A549 (cell line): ENCODE measurements at regions of chr1 and their contacts with region 1.

Region 1: GRCh38 chr1:179234863-179235262 is 5.4 kb upstream of the ABL2 start:
- DNase-seq: no peak
- ATAC-seq: no peak
- H3K4me3 ChIP-seq: no peak overlapping the region
- H3K27ac ChIP-seq: peak overlapping the region; percentile 38 to 72; a peak in 5 of 6 replicates
- H3K4me1 ChIP-seq: peaks cover 52% of the 10 kb centered on the region
- CTCF ChIP-seq: no peak
- EP300 ChIP-seq: no peak
- POLR2A ChIP-seq: no peak
- RAD21 ChIP-seq: no peak

Region 2: DNA sequence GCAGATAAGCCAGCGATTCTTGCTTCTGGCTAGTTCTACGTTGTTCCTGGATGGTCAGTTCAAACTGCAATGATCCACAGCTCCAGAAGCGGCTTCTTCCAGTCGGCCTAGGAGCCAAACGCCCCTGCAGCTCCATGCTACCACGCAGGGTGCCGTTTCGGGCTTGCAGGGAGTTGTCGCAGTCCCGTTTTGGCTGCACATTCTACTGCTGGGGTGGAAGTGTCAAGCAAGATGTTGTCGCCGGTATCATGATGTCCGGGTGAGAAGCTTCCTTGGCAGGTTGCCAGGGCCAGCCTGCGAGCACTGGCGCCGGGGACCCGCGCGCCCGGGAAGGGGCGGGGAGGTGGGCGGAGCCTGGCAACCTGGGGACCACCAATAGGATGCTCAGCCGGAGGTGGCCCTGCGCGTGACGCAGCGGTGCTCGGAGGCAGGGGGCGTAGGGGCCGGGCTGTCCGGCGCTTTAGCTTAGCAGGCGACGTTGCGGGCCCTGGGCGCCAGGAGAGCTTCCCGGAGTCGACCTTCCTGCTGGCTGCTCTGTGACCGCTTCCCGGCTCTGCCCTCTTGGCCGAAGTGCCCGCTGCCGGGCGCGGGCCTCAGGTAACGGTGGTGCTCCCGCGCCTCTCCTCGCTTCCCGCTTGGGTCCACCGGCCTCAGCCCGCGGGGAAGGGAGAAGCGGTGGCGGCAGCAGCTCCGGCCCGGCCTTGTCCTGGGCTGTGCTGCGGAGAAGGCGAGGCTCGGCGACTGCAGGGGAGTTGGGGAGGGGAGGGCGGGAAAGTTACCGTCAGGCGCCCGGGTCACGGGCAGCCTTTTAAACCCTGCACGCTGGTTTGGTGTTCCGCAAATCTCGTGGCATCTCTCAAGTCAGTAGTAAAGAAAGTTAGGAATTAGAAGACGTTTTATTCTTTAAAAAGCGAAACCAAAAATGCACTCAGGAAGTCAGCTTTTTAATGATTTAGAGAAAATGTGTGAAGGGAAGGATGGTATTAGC is 58.8 kb after region 1 on chr1 and contains the start of gene SOAT1:
- CTCF ChIA-PET with region 1: interaction called, 10 read pairs
- POLR2A ChIA-PET with region 1: interaction called, 3 read pairs
- DNase-seq: peak; percentile 94
- ATAC-seq: peak; percentile 96
- H3K4me3 ChIP-seq: peak within 1 kb of the TSS; percentile 76
- H3K27ac ChIP-seq: peak within 1 kb of the TSS; percentile 85 to 92
- H3K4me1 ChIP-seq: peaks cover 28% of the 10 kb centered on the region
- CTCF ChIP-seq: no peak
- EP300 ChIP-seq: no peak
- POLR2A ChIP-seq: peak; percentile 88
- RAD21 ChIP-seq: no peak
- polyA plus RNA-seq, gene SOAT1: 50.3 and 62.1 TPM in 2 replicates